ENCODE measurements at regions of chr17 and their contacts with region 1.

Region 1: DNA sequence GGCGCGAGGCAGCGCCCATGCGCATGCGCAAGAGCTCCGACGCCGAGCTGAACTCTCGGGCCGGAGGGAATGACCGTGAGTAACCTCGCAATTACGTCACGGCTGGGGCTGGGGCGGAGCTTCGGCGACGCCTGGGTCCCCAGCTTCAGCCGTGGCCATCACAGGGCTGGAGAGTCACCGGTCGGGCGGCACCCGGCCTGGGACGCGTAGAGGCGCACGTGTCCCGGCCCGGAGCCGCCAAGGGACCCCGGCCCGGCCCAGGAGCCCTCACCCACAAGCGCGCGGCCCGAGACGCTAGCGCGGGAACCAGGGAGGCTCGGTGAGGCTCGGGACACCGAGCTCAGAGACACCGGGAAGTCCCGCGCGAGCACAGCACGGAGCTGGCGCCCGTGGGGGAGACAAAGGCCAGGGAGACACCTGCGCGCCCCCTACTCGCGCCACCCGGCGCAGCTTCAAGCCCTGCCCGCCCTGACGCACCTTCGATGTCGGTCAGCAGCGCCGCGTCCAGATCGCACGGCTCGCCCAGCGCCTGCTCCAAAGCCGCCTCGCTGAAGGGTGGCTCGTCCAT is 452 bp downstream of the SREBF1 start:
- DNase-seq: peak; percentile 97 to 99 (median 99)
- H3K4me3 ChIP-seq: peak overlapping the region; percentile 61 to 91 (median 81)
- H3K4me3 Mint-ChIP-seq: peak overlapping the region; percentile 83 to 90
- H3K27ac ChIP-seq: peak overlapping the region; percentile 90 to 97
- H3K27ac Mint-ChIP-seq: peak overlapping the region; percentile 93 to 98 (median 94)
- H3K4me1 ChIP-seq: peaks cover 66 to 74% of the 10 kb centered on the region in 2 donors
- H3K4me1 Mint-ChIP-seq: peaks cover 63% of the 10 kb centered on the region
- H3K27me3 ChIP-seq: no peaks in the 10 kb centered on the region
- H3K27me3 Mint-ChIP-seq: peaks cover 0 to 4% (median 0%) of the 10 kb centered on the region in 3 donors
- CTCF ChIP-seq: no peak

Region 2: DNA sequence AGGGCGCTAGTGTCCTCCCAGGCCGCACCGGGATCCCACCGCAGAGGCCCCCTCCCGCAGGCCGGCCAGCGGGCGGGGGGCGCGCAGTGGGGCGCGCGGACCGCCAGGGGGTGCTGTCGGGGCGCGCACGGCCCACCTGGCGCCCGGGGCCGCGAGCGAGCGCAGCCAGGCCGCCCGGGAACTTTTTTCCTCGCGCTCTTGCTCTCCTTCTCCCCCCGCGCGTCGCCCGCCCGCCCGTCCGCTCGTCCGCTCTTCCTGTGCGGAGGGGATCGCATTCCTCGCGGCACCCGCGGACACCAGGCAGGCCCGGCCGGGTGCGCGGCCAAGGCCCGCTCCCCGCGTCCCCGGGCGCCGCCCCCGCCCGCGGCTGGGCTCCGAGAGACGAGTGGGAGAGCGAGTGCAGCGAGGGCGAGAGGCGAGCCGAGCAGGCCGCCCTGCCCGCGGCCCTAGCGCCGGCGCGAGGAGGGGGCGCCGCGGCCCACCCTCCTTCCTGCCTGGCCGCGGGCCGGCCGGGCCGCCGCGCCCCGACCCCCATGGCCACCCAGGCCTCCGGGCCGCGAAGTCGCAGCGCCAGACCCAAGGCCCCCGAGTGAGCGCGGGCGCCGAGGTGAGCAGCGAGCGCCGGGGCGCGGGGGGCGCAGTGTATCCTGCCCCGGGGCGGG is 155.0 kb before region 1 on chr17 and contains the start of gene RAI1:
- intact Hi-C with region 1: loop called in 1 of 2 experiments (anchors 10 kb)
- DNase-seq: peak; percentile 64 to 72 (median 69)
- H3K4me3 ChIP-seq: peak within 1 kb of the TSS; percentile 50 to 87 (median 66)
- H3K4me3 Mint-ChIP-seq: peak within 1 kb of the TSS; percentile 90 to 92
- H3K27ac ChIP-seq: peak within 1 kb of the TSS; percentile 75 to 89
- H3K27ac Mint-ChIP-seq: peak within 1 kb of the TSS; percentile 73 to 95 (median 89)
- H3K4me1 ChIP-seq: peaks cover 15 to 35% of the 10 kb centered on the region in 2 donors
- H3K4me1 Mint-ChIP-seq: peaks cover 33% of the 10 kb centered on the region
- H3K27me3 ChIP-seq: no peaks in the 10 kb centered on the region
- H3K27me3 Mint-ChIP-seq: peaks cover 3 to 10% (median 4%) of the 10 kb centered on the region in 3 donors
- CTCF ChIP-seq: peak; percentile 78
- polyA plus RNA-seq, gene RAI1: 0.89 to 4.4 (median 1.5) TPM

Region 3: DNA sequence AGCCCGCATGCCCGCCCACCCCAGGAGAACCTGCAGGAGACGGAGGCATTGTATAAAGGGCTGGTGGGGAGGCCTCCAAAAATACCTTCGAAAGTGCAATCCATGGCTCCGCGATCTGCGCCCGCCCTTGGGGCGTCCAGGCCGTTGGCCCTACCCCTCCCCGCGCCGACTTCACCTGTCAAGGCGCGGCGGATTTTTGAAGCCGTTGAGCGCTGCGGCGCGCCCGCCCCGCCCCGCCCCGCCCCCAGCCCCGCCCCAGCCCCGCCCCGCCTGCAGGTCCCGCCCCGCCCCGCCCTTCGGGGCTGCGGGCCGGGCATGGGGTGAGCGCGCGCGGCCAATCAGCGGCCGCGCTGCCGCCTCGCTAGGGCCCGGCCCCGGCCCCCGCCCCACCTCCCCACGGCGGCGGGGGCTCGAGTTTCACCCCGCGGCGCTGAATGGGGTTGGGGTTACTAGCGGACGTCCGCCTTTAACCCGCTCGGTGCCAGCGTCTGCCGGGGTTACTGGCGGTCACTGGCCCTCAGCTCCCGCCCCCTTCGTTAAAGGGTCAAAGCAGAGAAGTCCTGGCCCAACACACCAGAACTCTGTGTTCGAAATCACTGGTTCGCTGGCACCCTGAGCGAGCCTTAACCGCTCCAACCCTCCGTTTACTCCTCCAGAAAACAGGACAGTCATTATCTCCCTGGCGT is 12.8 kb before region 1 on chr17:
- intact Hi-C with region 1: loop called (anchors 2 kb)
- DNase-seq: peak; percentile 69 to 76 (median 72)
- H3K4me3 ChIP-seq: peak overlapping the region; percentile 45 to 75 (median 62)
- H3K4me3 Mint-ChIP-seq: peak overlapping the region; percentile 76 to 87
- H3K27ac ChIP-seq: peak overlapping the region; percentile 70 to 71
- H3K27ac Mint-ChIP-seq: peak overlapping the region; percentile 64 to 93 (median 87)
- H3K4me1 ChIP-seq: peaks cover 63 to 66% of the 10 kb centered on the region in 2 donors
- H3K4me1 Mint-ChIP-seq: peaks cover 68% of the 10 kb centered on the region
- H3K27me3 ChIP-seq: no peaks in the 10 kb centered on the region
- H3K27me3 Mint-ChIP-seq: peaks cover 0 to 9% (median 5%) of the 10 kb centered on the region in 3 donors
- CTCF ChIP-seq: no peak